PC-9 (cell line): ENCODE measurements at regions of chrX and their contacts with region 1.

Region 1: GRCh38 chrX:70970482-70970995 is 39.6 kb upstream of the SLC7A3 start:
- DNase-seq: no peak
- H3K4me3 ChIP-seq: no peak overlapping the region
- H3K27ac ChIP-seq: no peak overlapping the region
- H3K4me1 ChIP-seq: no peaks in the 10 kb centered on the region
- H3K27me3 ChIP-seq: peaks cover 19% of the 10 kb centered on the region; the same call in 1 of the 2 replicates
- CTCF ChIP-seq: peak; percentile 61

Region 2: GRCh38 chrX:70908541-70908940 is 62.0 kb before region 1 on chrX and contains the start of gene TEX11:
- CTCF ChIA-PET with region 1: no interaction called
- POLR2A ChIA-PET with region 1: no interaction called
- intact Hi-C with region 1: no loop called
- DNase-seq: no peak
- H3K4me3 ChIP-seq: no peak within 1 kb of the TSS
- H3K27ac ChIP-seq: no peak within 1 kb of the TSS
- H3K4me1 ChIP-seq: no peaks in the 10 kb centered on the region
- H3K27me3 ChIP-seq: no peaks in the 10 kb centered on the region
- CTCF ChIP-seq: no peak
- total RNA-seq, gene TEX11: not detected in 2 replicates

Region 3: DNA sequence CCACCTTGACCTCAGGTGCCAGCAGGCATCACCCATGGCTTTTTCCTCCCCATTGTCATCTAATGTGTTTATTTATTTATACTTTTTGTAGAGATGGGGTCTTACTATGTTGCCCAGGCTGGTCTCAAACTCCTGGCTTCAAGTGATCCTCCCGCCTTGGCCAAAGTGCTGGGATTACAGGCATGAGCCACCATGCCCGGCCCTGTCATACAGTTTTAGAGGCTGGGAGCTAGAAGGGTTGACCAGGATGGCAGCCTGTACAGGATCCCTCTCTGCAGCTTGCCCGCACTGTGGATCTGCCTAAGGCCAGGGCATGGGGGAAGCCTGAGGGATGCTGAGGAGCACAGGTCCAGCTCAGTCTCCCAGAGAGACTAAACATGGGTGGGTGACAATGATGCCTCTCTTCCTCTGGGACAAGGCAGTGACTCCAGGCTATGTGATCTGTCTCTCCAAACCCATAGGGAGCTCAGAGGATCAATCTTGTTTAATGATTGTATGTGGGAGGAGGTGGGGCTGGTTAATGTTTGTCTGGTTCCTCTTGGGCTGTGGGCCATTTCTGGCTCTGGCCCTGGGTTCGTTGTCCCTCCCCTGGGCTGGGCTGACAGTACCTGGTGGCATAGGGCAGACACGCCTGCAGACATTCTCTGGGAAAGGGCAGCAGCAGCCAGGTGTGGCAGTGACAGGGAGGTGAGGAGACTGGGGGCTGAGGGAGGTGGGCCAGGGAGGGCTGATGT is 244.2 kb after region 1 on chrX:
- CTCF ChIA-PET with region 1: interaction called, 13 read pairs
- POLR2A ChIA-PET with region 1: no interaction called
- intact Hi-C with region 1: no loop called
- DNase-seq: no peak
- H3K4me3 ChIP-seq: no peak overlapping the region
- H3K27ac ChIP-seq: no peak overlapping the region
- H3K4me1 ChIP-seq: peaks cover 9% of the 10 kb centered on the region
- H3K27me3 ChIP-seq: no peaks in the 10 kb centered on the region
- CTCF ChIP-seq: no peak

Region 4: DNA sequence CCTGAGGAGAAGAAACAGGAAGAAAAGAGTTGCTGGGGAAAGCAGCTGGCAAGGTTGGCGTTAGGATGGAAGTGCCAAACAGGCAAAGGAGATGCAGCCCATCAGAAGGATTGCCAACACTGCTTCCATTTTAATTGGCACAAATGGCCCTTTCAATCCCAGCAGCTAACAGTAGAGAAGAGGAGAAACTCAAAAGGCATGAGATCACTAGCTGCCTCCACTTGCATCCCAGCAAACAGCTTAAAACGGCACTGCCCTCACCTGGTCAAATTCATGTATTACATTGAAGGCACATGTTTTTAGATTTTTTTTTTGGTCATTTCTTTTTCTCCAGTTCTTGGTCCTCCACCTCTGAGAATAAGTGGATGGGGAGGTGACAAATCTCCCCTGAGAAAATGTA is 681.9 kb after region 1 on chrX:
- CTCF ChIA-PET with region 1: no interaction called
- POLR2A ChIA-PET with region 1: no interaction called
- intact Hi-C with region 1: loop called (anchors 5 kb)
- DNase-seq: peak in 1 of 2 experiments; percentile 18
- H3K4me3 ChIP-seq: no peak overlapping the region
- H3K27ac ChIP-seq: no peak overlapping the region
- H3K4me1 ChIP-seq: no peaks in the 10 kb centered on the region
- H3K27me3 ChIP-seq: 0 out of 2 replicates have a peak, but pooled peaks cover 6% of the 10 kb centered on the region
- CTCF ChIP-seq: peak; percentile 76